ENCODE measurements at regions of chr9 and their contacts with region 1.

Region 1: DNA sequence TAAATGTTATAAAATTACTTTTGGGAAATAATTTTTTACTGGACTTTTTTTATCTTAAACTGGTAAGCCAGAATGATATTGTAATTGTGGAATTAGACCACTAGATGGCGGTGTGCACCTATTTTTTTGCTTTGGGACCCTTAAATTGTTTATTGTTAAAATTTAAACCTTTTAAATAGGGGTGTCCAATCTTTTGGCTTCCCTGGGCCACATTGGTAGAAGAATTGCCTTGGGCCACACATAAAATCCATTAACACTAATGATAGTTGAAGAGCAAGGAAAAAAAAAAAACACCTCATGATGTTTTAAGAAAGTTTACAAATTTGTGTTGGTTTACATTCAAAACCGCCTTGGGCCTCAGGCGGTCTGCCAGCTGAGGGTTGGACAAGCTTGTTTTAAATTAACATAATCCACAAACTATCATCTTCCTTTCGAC is 28.4 kb upstream of the GADD45G start:
- DNase-seq: no peak
- ATAC-seq: no peak
- H3K4me3 ChIP-seq: no peak overlapping the region
- H3K27ac ChIP-seq: no peak overlapping the region
- H3K4me1 ChIP-seq: no peaks in the 10 kb centered on the region
- H3K27me3 ChIP-seq: peaks cover 0 to 3% (median 2%) of the 10 kb centered on the region in 3 donors
- CTCF ChIP-seq: peak; percentile 71

Region 2: DNA sequence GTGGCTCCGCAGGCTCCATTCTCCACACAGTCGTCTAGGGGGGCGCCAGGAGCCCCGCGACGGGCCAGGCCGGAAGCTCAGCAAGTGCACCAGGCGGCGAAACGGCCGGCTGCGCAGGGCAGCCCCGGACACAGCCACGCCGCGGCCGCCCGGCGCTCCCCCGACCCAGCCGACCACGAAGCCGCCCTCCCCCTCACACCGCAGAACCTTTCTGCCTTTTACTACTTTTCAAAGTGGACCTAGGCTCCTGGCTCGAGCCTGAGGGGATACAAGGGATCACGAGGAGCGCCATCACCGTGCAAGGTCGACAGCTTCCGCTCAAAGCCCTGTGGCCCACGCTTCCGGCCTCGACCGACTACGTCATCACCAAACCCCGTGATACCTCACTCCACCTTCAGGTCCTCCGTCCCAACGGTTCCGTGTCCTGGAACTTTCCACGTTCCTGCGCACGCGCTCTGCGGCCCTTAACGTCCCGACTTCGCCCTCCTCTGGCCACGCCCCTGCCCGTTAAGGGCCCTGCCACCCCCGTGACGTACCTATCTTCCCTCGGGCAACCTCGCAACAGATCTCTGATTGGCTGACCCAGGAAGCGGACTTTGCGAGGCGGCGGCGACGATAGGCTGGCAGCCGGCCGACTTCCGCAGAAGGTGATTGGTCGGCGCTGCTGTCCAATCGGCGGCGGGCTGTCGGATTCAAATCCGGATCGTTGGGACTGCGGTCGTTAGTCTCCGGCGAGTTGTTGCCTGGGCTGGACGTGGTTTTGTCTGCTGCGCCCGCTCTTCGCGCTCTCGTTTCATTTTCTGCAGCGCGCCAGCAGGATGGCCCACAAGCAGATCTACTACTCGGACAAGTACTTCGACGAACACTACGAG is 265.7 kb before region 1 on chr9 and contains the start of gene CKS2:
- intact Hi-C with region 1: no loop called
- DNase-seq: peak; percentile 100
- ATAC-seq: peak; percentile 94 to 97 (median 96)
- H3K4me3 ChIP-seq: peak within 1 kb of the TSS; percentile 76
- H3K27ac ChIP-seq: peak within 1 kb of the TSS; percentile 100
- H3K4me1 ChIP-seq: peaks cover 22% of the 10 kb centered on the region
- H3K27me3 ChIP-seq: no peaks in the 10 kb centered on the region
- CTCF ChIP-seq: no peak
- total RNA-seq, gene CKS2: 3.6 to 14.4 (median 10.6) TPM

Region 3: GRCh38 chr9:90870621-90871326 is 1294.4 kb after region 1 on chr9:
- intact Hi-C with region 1: loop called in 1 of 2 experiments (anchors 5 kb)
- DNase-seq: no peak
- ATAC-seq: peak in 3 of 4 donors; percentile 51 to 58 (median 58)
- H3K4me3 ChIP-seq: no peak overlapping the region
- H3K27ac ChIP-seq: no peak overlapping the region
- H3K4me1 ChIP-seq: peaks cover 9% of the 10 kb centered on the region
- H3K27me3 ChIP-seq: no peaks in the 10 kb centered on the region
- CTCF ChIP-seq: peak; percentile 91